ENCODE measurements at regions of chr2 and their contacts with region 1.

Region 1: DNA sequence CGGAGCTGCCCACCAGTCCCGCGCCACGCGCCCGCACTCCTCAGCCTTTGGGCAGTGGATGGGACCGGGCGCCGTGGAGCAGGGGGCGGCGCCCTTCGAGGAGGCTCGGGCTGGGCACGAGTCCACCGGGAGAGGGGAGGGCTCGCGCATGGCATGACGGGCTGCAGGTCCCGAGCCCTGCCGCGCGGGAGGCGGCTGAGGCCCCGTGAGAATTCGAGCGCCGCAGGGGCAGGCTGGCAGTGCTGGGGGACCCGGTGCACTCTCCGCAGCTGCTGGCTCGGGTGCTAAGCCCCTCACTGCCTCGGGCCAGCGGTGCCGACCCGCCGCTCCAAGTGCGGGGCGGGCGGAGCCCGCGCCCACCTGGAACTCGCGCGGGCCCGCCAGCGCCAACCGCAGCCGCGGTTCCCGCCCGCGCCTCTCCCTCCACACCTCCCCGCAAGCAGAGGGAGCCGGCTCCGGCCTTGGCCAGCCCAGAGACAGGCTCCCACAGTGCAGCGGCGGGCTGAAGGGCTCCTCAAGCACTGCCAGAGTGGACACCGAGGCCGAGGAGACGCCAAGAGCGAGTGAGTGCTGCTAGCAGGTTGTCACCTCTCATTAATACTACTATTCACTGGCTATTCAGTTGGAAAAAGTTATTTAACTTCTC is 3.6 kb upstream of the TTC21B start:
- DNase-seq: no peak
- ATAC-seq: no peak
- H3K4me3 ChIP-seq: no peak overlapping the region
- H3K4me3 Mint-ChIP-seq: no peak overlapping the region
- H3K27ac ChIP-seq: no peak overlapping the region
- H3K27ac Mint-ChIP-seq: no peak overlapping the region
- H3K4me1 ChIP-seq: peaks cover 6 to 16% of the 10 kb centered on the region in 2 experiments
- H3K4me1 Mint-ChIP-seq: peaks cover 17 to 24% (median 18%) of the 10 kb centered on the region in 3 donors
- H3K27me3 ChIP-seq: no peaks in the 10 kb centered on the region
- H3K27me3 Mint-ChIP-seq: no peaks in the 10 kb centered on the region

Region 2: GRCh38 chr2:166127217-166128155 is 170.3 kb after region 1 on chr2 and contains the start of gene SCN1A:
- CTCF ChIA-PET with region 1: interaction called, 3 to 15 read pairs
- POLR2A ChIA-PET with region 1: interaction called in 1 of 2 experiments, 4 read pairs
- DNase-seq: peak in 2 of 35 experiments; percentile 6 to 44
- ATAC-seq: no peak
- H3K4me3 ChIP-seq: no peak within 1 kb of the TSS
- H3K4me3 Mint-ChIP-seq: no peak within 1 kb of the TSS
- H3K27ac ChIP-seq: no peak within 1 kb of the TSS
- H3K27ac Mint-ChIP-seq: no peak within 1 kb of the TSS
- H3K4me1 ChIP-seq: no peaks in the 10 kb centered on the region
- H3K4me1 Mint-ChIP-seq: peaks cover 4 to 5% (median 4%) of the 10 kb centered on the region in 3 donors
- H3K27me3 ChIP-seq: peaks cover 0 to 2% of the 10 kb centered on the region in 2 experiments
- H3K27me3 Mint-ChIP-seq: peaks cover 14 to 20% of the 10 kb centered on the region in 2 donors
- total RNA-seq, gene SCN1A: not detected

Region 3: DNA sequence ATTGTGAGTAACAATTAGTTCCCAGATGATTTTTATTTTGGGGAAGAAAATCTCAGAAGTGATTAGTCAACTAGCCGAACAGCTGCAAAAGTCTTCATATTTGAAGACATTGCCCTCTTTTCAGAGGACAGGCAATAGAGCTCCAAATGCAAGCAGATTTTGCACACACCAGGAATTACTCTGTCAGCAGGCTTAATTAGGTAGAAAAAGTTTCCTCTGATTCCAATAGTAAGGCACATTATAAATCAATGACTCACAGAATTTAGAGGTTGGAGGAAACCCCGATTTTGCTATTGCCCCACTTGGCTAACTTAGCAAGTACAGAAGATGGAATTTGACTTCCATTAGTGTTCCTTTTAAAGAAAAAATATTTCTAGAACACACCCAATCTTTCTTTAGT is 201.4 kb after region 1 on chr2:
- CTCF ChIA-PET with region 1: no interaction called
- POLR2A ChIA-PET with region 1: no interaction called
- DNase-seq: no peak
- ATAC-seq: no peak
- H3K4me3 ChIP-seq: no peak overlapping the region
- H3K4me3 Mint-ChIP-seq: no peak overlapping the region
- H3K27ac ChIP-seq: no peak overlapping the region
- H3K27ac Mint-ChIP-seq: no peak overlapping the region
- H3K4me1 ChIP-seq: no peaks in the 10 kb centered on the region
- H3K4me1 Mint-ChIP-seq: no peaks in the 10 kb centered on the region
- H3K27me3 ChIP-seq: no peaks in the 10 kb centered on the region
- H3K27me3 Mint-ChIP-seq: peaks cover 4 to 13% of the 10 kb centered on the region in 2 donors